Thyroid gland (tissue), 4 donors: ENCODE measurements at regions of chr12 and their contacts with region 1.

Region 1: DNA sequence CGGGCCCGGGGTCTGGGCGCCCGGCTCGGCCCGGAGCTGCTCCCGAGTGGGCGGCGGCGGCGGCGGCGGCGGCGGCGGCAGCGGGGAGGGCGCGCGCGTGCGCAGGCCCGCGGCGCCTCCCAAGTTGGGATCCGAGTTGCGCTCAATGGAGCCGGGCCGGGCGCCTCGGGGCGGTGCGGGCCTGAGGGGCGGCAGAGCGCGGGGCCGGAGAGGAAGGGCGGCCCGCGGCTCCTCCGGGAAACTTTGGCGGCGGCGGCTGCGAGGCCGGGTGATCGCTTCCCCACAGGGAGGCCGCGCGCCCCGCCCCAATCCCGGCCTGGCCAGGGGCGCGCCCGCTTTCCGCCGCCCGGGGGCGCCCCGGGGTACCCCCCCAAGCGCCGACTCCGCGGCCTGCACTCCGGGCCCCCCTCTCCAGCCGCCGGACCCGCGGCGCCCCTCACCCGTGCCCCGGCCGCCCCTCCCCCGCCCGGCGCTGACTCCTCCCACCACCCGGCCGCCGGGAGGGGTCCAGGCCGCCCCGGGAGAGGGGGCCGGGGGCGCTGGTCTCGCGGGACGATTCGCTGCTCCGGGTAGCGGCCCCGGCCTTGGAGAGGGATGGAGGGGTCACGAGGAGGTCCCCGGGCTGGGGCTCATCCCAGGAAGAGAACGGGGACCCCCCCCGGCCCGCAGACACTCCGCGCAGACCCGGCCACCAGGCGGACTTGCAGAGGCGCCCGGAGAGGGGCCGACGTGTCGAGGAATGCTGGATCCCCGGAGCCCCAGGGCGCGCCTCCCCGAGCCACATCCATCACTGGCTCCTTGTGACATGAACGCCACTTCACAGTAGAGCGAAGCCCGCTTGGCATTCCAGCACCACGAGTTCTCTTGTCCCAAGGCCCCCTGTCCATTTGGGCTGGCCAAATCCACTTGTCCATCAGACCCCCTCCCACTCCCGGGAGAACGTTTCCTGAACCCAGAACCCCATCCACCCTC is at the start of gene RILPL1:
- DNase-seq: peak; percentile 67 to 74
- H3K4me3 ChIP-seq: peak within 1 kb of the TSS; percentile 22 to 75 (median 49)
- H3K27ac ChIP-seq: peak within 1 kb of the TSS; percentile 77 to 87 (median 87)
- H3K4me1 ChIP-seq: peaks cover 24 to 38% of the 10 kb centered on the region in 2 donors
- H3K27me3 ChIP-seq: no peaks in the 10 kb centered on the region
- CTCF ChIP-seq: peak in 4 of 6 experiments; percentile 13 to 52 (median 29)
- POLR2A ChIP-seq: peak in 1 of 2 donors; percentile 45
- total RNA-seq, gene RILPL1: 22.0 to 37.8 (median 31.6) TPM

Region 2: GRCh38 chr12:123478762-123479161 is 55.2 kb before region 1 on chr12:
- intact Hi-C with region 1: loop called (anchors 10 kb)
- DNase-seq: peak; percentile 35 to 66
- H3K4me3 ChIP-seq: no peak overlapping the region
- H3K27ac ChIP-seq: peak overlapping the region; percentile 65 to 82 (median 69)
- H3K4me1 ChIP-seq: peaks cover 21 to 56% of the 10 kb centered on the region in 2 donors
- H3K27me3 ChIP-seq: no peaks in the 10 kb centered on the region
- CTCF ChIP-seq: no peak
- POLR2A ChIP-seq: no peak

Region 3: GRCh38 chr12:123670882-123671728 is 137.1 kb after region 1 on chr12 and contains the start of gene TCTN2:
- intact Hi-C with region 1: no loop called
- DNase-seq: peak; percentile 96 to 97
- H3K4me3 ChIP-seq: peak within 1 kb of the TSS; percentile 38 to 83 (median 41)
- H3K27ac ChIP-seq: peak within 1 kb of the TSS in 2 of 3 donors; percentile 10 to 14
- H3K4me1 ChIP-seq: peaks cover 8 to 11% of the 10 kb centered on the region in 2 donors
- H3K27me3 ChIP-seq: no peaks in the 10 kb centered on the region
- CTCF ChIP-seq: no peak
- POLR2A ChIP-seq: peak in 1 of 2 donors; percentile 69
- total RNA-seq, gene TCTN2: 21.3 to 34.5 (median 27.1) TPM